ENCODE measurements at regions of chr2 and their contacts with region 1.

Region 1: DNA sequence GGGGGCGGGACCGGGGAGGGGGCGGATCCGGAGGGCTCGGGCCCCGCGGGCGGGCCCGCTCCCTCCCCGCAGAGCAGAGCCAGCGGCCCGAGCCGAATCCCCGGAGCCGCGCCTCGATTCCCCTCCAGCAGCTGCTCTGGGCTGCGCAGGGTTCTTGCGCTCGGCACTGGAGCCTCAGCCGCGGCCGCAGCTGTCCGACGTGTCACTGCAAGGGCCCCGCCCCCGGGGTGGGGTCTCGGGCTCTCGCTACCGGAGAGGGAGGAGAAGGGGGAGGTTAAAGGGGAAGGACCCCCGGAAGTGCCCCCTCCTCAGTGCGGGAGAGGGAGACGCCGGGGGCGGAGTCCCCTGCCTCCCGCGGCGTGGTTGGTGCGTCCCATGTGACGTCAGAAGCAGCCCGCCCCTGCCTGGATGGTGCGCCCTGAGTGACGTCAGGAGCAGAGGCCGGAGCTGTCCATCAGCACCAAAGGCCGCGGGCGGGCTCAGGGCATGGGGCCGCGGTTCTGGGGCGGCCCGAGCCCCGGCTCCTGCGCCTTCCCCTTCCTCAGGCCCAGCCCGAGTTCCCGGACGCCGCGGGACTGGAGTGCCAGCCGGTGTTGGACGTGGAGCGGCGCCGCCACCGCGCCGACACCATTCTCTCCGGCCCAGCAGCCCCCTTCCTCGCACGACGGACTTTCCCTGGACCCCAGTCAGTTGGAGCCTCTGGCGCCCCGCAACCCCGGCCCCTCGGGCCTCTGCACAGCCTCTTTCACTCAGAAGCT is at the starts of genes CHPF and TMEM198:
- DNase-seq: peak; percentile 69
- ATAC-seq: peak; percentile 85
- H3K4me3 ChIP-seq: peak within 1 kb of the TSS; percentile 69
- H3K27ac ChIP-seq: no peak within 1 kb of the TSS
- H3K4me1 ChIP-seq: peaks cover 3% of the 10 kb centered on the region; the same call in 1 of the 2 replicates
- H3K27me3 ChIP-seq: peaks cover 0 to 7% of the 10 kb centered on the region in 2 experiments; a peak in 2 of 4 replicates
- CTCF ChIP-seq: no peak
- EP300 ChIP-seq: no peak
- POLR2A ChIP-seq: peak; percentile 61
- RAD21 ChIP-seq: no peak
- polyA plus RNA-seq, gene CHPF: 0.09 TPM in 1 of 2 experiments, not detected in the other
- polyA plus RNA-seq, gene TMEM198: not detected

Region 2: DNA sequence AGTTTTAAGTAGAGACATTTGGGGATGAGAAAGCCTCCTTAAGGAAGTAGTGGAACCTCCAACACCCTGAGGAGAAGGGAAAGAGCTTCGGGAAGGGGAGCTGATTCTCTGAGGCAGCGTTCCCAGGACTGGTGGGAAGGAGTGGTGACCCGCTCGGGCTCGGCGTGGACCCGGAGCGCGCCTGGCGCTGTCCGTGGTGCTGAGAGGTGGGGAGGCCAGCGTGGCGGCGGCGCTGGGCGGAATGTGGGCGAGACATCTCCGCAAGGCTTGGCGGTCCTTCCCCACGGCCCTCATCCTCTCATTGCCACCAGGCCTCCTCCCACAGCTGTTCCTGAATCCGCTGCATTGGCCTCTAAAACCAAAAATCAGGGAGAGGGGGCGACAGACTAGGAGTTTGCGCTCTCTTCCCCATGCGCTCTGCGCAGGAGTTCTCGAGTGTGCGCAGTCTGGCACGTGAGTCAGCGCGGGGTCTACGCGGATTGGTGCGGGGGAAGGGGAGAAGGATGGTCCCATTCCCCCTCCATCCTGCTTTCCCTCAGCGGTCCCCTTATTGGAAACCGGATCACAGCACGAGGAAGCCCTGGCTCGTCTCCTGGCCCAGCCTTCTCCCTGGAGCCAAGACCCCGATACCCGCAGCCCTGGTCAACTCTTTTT is 212.1 kb before region 1 on chr2:
- CTCF ChIA-PET with region 1: no interaction called
- POLR2A ChIA-PET with region 1: no interaction called
- RAD21 ChIA-PET with region 1: no interaction called
- SMC1A ChIA-PET with region 1: no interaction called
- in situ Hi-C with region 1: no loop called
- intact Hi-C with region 1: no loop called
- DNase-seq: no peak
- ATAC-seq: peak; percentile 29; the same call in 1 of the 3 replicates
- H3K4me3 ChIP-seq: no peak overlapping the region
- H3K27ac ChIP-seq: no peak overlapping the region
- H3K4me1 ChIP-seq: no peaks in the 10 kb centered on the region
- H3K27me3 ChIP-seq: peaks cover 0 to 5% of the 10 kb centered on the region in 2 experiments; a peak in 3 of 4 replicates
- CTCF ChIP-seq: no peak
- EP300 ChIP-seq: no peak
- POLR2A ChIP-seq: no peak
- RAD21 ChIP-seq: no peak

Region 3: DNA sequence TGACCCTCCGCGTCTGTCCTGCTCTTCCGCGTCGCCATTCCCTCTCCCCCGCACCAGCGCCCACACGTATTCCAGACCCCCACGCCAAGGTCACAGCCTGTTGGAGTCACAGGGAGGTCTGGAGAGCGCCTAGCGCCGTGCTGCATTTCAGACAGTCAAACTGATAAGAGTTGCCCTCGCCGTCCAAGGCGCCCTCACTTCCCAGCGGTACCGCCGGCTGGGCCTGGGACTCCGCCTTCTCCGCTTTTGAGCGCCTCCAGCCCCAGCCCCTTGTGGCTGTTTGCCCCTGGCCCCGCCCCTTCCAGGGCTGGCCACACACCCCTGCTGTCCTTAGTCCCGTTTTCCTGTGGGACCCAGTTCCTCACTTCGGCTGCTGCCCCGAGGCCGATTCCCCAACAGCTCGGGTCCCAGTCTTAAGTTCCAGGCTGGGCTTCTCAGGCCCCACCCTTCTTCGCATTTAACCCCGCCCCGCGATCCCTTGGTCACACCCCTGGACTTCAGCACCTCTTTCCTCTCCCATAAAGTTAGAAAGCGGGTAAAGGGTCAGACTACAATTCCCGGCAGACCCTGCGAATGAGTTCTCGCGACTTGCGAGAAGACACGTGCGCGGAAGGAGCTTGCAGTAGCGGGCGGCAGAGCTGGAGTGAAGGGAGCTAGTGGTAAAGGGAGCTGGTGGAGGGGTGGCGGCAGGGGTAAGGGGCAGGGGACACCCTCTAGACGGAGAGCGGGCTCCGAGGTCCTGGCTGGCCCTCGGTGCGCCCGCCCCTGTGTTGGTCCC is 45.3 kb before region 1 on chr2 and contains the start of gene GMPPA:
- CTCF ChIA-PET with region 1: interaction called, 26 read pairs
- POLR2A ChIA-PET with region 1: interaction called, 3 read pairs
- RAD21 ChIA-PET with region 1: interaction called, 5 read pairs
- SMC1A ChIA-PET with region 1: no interaction called
- in situ Hi-C with region 1: no loop called
- intact Hi-C with region 1: no loop called
- DNase-seq: peak; percentile 96
- ATAC-seq: peak; percentile 93
- H3K4me3 ChIP-seq: peak within 1 kb of the TSS; percentile 83
- H3K27ac ChIP-seq: peak within 1 kb of the TSS; percentile 79
- H3K4me1 ChIP-seq: peaks cover 15% of the 10 kb centered on the region
- H3K27me3 ChIP-seq: peaks cover 5 to 15% of the 10 kb centered on the region in 2 experiments
- CTCF ChIP-seq: no peak
- EP300 ChIP-seq: 0 out of 4 replicates have a peak, but pooled peaks of 1 of the 2 experiments have one; percentile 7
- POLR2A ChIP-seq: peak; percentile 92
- RAD21 ChIP-seq: no peak
- polyA plus RNA-seq, gene GMPPA: 1.9 to 10.2 TPM

Region 4: GRCh38 chr2:219560037-219560892 is 16.5 kb after region 1 on chr2:
- CTCF ChIA-PET with region 1: interaction called, 22 read pairs
- POLR2A ChIA-PET with region 1: no interaction called
- RAD21 ChIA-PET with region 1: interaction called, 3 read pairs
- SMC1A ChIA-PET with region 1: no interaction called
- in situ Hi-C with region 1: no loop called
- intact Hi-C with region 1: no loop called
- DNase-seq: no peak
- ATAC-seq: peak; percentile 75
- H3K4me3 ChIP-seq: no peak overlapping the region
- H3K27ac ChIP-seq: no peak overlapping the region
- H3K4me1 ChIP-seq: no peaks in the 10 kb centered on the region
- H3K27me3 ChIP-seq: no peaks in the 10 kb centered on the region; a peak in 2 of 4 replicates
- CTCF ChIP-seq: peak; percentile 41 to 70 (median 45)
- EP300 ChIP-seq: no peak
- POLR2A ChIP-seq: no peak
- RAD21 ChIP-seq: 0 out of 2 replicates have a peak, but pooled peaks have one; percentile 14

Region 5: GRCh38 chr2:219642465-219643080 is 98.8 kb after region 1 on chr2:
- CTCF ChIA-PET with region 1: interaction called, 68 read pairs
- POLR2A ChIA-PET with region 1: no interaction called
- RAD21 ChIA-PET with region 1: interaction called, 25 read pairs
- SMC1A ChIA-PET with region 1: interaction called, 17 read pairs
- in situ Hi-C with region 1: no loop called
- intact Hi-C with region 1: loop called (anchors 1 kb)
- DNase-seq: peak; percentile 73
- ATAC-seq: peak; percentile 99
- H3K4me3 ChIP-seq: peak overlapping the region; percentile 24; the same call in 1 of the 2 replicates
- H3K27ac ChIP-seq: 0 out of 2 replicates have a peak overlapping the region, but pooled peaks have one; percentile 37
- H3K4me1 ChIP-seq: peaks cover 13% of the 10 kb centered on the region
- H3K27me3 ChIP-seq: no peaks in the 10 kb centered on the region
- CTCF ChIP-seq: peak; percentile 99 to 100 (median 100); a peak in 5 of 6 replicates
- EP300 ChIP-seq: peak; percentile 21 to 50; a peak in 1 of 4 replicates
- POLR2A ChIP-seq: 0 out of 2 replicates have a peak, but pooled peaks have one; percentile 38
- RAD21 ChIP-seq: peak; percentile 93

Region 6: DNA sequence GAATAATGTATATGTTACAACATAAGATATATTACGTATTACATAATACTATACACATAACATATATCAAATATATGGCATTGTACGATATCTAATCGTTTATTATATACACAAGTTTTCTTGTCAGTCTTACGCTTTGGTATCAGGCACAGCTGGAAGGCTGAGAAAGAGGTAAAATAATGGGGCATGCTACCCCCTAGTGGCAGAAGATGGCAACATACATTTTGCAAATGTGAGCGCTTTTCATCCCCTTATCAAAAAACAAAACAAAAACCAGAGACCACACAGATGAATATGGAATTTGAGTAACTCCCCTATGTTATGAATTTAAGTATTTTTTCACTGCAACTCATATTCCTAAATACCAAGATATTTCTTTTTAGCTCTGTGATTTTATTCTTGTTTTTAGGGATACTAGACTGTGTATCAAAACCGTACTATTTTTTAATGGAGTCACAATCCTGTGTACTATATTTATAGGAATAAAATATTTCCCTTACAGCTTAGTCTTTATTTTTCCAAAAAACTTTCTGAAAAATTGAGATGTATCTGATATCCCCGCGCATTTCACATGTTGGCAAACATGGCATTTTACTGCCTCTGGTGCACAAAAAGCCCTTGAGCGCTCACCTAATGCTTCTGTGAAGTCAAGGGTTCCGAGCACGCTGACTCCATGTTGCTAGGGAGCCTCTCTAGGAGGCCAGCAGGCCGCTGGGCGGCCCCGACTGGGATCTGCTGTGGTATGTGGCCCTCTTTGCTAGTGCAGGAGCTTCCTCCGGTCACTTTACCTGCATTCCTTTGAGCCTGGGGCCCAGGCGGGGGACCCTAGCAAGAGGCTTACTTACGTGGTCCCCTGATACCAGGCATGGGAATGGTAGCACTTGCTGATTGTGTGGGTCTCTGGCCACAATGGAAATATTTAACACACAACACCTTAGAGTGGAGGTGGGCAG is 146.2 kb after region 1 on chr2:
- CTCF ChIA-PET with region 1: interaction called, 63 read pairs
- POLR2A ChIA-PET with region 1: interaction called, 3 read pairs
- RAD21 ChIA-PET with region 1: interaction called, 20 read pairs
- SMC1A ChIA-PET with region 1: interaction called, 12 read pairs
- in situ Hi-C with region 1: loop called (anchors 5 kb)
- intact Hi-C with region 1: loop called (anchors 1 kb)
- DNase-seq: peak; percentile 23
- ATAC-seq: peak; percentile 62
- H3K4me3 ChIP-seq: no peak overlapping the region
- H3K27ac ChIP-seq: no peak overlapping the region
- H3K4me1 ChIP-seq: peaks cover under 1% of the 10 kb centered on the region; the same call in 1 of the 2 replicates
- H3K27me3 ChIP-seq: peaks cover 0 to 2% of the 10 kb centered on the region in 2 experiments; a peak in 1 of 4 replicates
- CTCF ChIP-seq: peak; percentile 63 to 77 (median 66)
- EP300 ChIP-seq: no peak
- POLR2A ChIP-seq: no peak
- RAD21 ChIP-seq: peak; percentile 69

Region 7: DNA sequence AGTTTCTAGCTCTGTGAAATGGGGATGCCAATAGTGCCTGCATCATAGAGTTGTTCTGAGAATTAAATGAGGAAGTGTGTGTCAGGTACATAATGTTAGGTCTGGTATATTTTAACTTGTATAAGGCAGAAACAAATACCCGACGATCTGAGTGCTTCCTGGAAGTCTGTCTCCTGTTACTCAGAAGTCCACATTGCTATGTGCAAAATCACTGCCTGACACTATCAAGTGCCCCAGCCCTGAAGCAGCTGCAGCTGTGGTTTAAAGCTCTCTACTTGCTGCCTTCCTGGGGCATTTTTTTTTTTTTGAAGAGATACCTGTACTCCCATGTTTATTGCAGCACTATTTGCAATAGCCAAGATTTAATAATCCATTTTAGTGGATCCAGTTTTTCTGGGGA is 209.0 kb after region 1 on chr2:
- CTCF ChIA-PET with region 1: no interaction called
- POLR2A ChIA-PET with region 1: no interaction called
- RAD21 ChIA-PET with region 1: no interaction called
- SMC1A ChIA-PET with region 1: no interaction called
- in situ Hi-C with region 1: no loop called
- intact Hi-C with region 1: no loop called
- DNase-seq: no peak
- ATAC-seq: no peak
- H3K4me3 ChIP-seq: no peak overlapping the region
- H3K27ac ChIP-seq: no peak overlapping the region
- H3K4me1 ChIP-seq: no peaks in the 10 kb centered on the region
- H3K27me3 ChIP-seq: no peaks in the 10 kb centered on the region; a peak in 1 of 4 replicates
- CTCF ChIP-seq: no peak
- EP300 ChIP-seq: no peak
- POLR2A ChIP-seq: no peak
- RAD21 ChIP-seq: no peak